ENCODE measurements at regions of chr22 and their contacts with region 1.

Region 1: GRCh38 chr22:23128269-23129108 is 13.3 kb downstream of the RSPH14 start:
- DNase-seq: no peak
- ATAC-seq: peak; percentile 87
- H3K4me3 ChIP-seq: no peak overlapping the region
- H3K27ac ChIP-seq: no peak overlapping the region
- H3K4me1 ChIP-seq: no peaks in the 10 kb centered on the region
- H3K27me3 ChIP-seq: no peaks in the 10 kb centered on the region
- CTCF ChIP-seq: peak; percentile 73

Region 2: DNA sequence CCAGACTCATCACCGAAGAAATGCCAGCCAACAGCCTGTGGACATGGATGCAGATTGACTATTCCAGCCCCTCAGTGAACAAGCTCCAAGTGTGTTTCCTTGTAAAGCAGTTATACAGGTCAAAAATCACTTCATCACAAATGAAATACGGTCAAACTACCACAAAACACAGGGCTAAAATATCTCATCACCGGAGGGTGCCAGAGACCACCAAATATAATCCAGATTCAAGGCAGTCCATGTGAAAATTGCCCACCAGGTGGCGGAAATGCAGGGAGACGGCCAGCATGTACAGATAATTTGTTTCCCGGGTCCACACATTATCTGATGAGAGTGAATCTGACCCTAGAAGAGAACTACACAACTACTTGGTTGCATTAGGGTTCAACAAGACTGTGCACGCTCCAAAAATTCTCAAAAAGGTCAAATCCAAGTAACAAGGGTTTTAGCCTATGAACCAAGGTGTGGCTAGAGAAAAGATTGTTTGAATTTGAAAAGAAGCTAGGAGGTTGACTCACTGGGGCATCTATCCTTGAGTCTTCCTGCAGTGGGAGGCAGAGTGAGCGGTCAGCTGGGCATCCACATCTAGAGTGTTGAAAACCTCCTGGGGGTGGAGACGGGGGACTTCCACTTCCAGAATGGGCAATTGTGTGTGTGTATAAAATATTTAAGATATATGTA is 169.2 kb before region 1 on chr22:
- intact Hi-C with region 1: loop called (anchors 5 kb)
- DNase-seq: no peak
- ATAC-seq: peak; percentile 56
- H3K4me3 ChIP-seq: no peak overlapping the region
- H3K27ac ChIP-seq: no peak overlapping the region
- H3K4me1 ChIP-seq: no peaks in the 10 kb centered on the region
- H3K27me3 ChIP-seq: peaks cover 5% of the 10 kb centered on the region
- CTCF ChIP-seq: peak; percentile 72

Measured in upper lobe of right lung (tissue), 1 donor.